Ascending aorta (tissue), 2 donors: ENCODE measurements at regions of chr1 and their contacts with region 1.

Region 1: GRCh38 chr1:2194898-2195673 is 514 bp upstream of the FAAP20 start:
- DNase-seq: peak; percentile 70 to 95
- H3K4me3 ChIP-seq: peak overlapping the region; percentile 58 to 85
- H3K27ac ChIP-seq: peak overlapping the region; percentile 94 to 97
- H3K4me1 ChIP-seq: peaks cover 31 to 57% of the 10 kb centered on the region in 2 donors
- H3K27me3 ChIP-seq: no peaks in the 10 kb centered on the region
- CTCF ChIP-seq: peak; percentile 97 to 100 (median 98)

Region 2: DNA sequence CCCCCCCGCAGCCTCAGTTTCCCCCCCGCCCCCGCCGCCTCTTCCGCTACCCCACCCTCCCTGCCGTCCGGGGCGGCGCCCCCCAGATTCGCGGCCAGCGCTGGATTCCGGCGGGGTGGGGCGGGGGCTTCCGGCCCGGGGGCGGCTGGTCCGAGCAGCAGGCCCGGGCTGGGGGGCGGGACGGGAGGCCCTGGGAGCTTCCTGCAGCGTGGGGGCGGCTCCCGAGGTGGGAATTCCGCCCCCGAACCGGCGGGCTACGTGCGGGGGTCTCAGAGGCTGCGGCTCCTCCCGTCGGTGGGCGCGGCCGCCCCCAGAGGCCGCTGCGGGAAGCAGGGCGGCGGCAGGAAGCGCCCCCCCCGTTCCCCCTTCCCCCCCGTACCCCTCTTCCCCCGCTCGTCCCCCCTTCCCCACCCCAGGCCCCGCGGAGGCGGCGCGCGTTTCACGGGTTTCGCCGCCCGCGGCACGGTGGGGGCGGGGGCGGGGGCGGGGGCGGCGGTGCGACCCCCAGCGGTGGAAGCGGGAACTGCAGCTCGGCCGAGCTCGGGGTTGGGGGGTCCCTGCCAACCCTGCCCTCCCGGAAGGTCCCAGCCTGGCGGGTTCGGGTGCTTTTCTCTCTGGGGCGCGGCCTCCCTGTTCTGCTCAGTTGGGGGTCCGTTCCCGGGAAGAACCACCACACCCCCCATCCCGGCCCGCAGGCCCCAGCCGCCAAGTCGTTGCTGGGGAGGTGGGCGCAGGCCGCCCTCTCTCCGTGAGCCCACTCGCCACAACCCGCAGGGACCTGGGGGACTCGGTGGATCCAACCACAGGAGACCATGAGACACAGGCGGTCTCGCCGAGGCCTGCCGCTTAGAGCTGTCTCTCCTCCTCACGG is 120.0 kb after region 1 on chr1:
- intact Hi-C with region 1: loop called (anchors 5 kb)
- DNase-seq: no peak
- H3K4me3 ChIP-seq: peak overlapping the region; percentile 80 to 81
- H3K27ac ChIP-seq: peak overlapping the region; percentile 92 to 95
- H3K4me1 ChIP-seq: peaks cover 28 to 73% of the 10 kb centered on the region in 2 donors
- H3K27me3 ChIP-seq: no peaks in the 10 kb centered on the region
- CTCF ChIP-seq: peak; percentile 81 to 95 (median 91)

Region 3: GRCh38 chr1:2391041-2391930 is 196.2 kb after region 1 on chr1 and contains the starts of genes MORN1 and RER1:
- intact Hi-C with region 1: loop called (anchors 2 kb)
- DNase-seq: peak; percentile 94 to 99
- H3K4me3 ChIP-seq: peak within 1 kb of the TSS; percentile 81 to 86
- H3K27ac ChIP-seq: peak within 1 kb of the TSS; percentile 84 to 86
- H3K4me1 ChIP-seq: peaks cover 4 to 18% of the 10 kb centered on the region in 2 donors
- H3K27me3 ChIP-seq: no peaks in the 10 kb centered on the region
- CTCF ChIP-seq: no peak
- total RNA-seq, gene MORN1: 18.4 TPM
- total RNA-seq, gene RER1: 61.3 TPM

Region 4: DNA sequence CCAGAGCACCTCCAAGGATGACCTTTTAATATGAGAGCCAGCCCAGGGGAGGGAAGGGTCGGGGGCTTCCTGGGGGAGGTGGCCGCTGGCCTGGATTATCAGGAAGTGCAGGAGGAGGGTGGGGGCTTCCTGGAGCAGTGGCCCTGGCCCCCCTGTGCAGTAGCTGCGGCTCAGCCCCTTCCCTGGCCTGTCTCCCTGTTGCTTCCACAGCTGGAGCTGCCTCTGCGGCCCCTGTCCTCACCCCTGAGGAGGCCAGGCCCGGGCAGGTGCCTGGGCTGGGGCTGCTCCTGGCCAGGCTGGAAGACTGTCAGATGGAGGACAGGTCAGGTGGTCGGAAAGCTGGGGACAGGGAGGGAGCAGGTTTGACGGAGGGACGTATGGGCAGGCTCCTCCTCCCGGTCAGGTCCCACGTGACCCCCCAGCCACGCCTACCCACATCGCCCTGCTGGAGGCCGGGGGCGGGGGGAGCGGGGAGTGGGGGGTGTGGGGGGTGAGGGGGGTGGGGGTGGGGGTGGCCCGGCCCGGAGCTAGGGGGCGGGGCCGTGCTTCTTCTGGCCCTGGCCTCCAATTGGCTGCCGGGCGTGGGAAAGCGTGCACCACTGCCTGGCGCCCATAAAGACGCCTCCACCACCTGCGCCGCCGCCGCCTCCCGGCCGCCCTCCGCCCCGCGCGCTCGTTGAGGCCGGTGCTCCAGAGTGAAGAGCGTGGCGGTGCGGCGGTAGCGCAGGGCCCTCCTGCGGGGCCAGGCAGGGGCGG is 350.9 kb after region 1 on chr1:
- intact Hi-C with region 1: loop called (anchors 2 kb)
- DNase-seq: peak; percentile 71 to 91
- H3K4me3 ChIP-seq: peak overlapping the region; percentile 53 to 67
- H3K27ac ChIP-seq: peak overlapping the region; percentile 92 to 95
- H3K4me1 ChIP-seq: peaks cover 13 to 36% of the 10 kb centered on the region in 2 donors
- H3K27me3 ChIP-seq: no peaks in the 10 kb centered on the region
- CTCF ChIP-seq: no peak